CD8-positive, alpha-beta T cell (primary cell): ENCODE measurements at regions of chr6 and their contacts with region 1.

Region 1: DNA sequence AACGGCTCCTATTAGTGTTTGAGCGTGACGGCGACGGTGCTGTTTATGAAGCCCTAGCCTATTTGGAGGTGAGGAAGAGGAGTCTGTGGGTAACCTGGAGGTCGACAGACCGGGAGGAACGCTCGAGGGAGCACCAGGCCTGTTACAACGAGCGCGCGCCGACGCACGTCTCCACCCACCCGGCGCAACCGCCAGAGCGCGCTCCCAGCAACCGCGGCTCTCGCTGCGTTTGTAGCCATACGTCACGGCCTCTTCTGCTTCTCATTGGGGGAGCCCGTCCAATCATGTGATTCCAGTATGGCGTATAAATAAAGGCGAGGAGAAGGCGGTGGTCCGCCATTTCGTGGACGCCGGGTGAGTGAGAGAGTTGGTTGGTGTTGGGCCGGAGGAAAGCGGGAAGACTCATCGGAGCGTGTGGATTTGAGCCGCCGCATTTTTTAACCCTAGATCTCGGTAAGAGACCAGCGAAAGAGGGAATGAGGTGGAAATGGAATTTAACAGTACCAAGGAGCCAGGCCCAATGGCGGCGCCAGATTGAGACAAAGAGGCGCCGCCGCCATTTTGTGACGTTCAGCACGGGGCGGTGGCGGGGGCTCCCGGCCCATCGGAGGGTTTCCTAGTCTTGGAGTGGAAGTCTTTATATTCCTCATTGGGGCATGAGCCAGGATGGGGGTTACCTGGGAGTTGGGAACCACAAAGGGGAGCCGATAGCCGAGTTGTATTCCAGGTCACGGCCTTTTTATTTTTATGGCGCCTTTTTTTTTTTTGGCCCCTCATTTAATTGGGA is at the start of gene SRSF3:
- DNase-seq: peak; percentile 90 to 99 (median 94)
- ATAC-seq: peak; percentile 86
- H3K4me3 ChIP-seq: peak within 1 kb of the TSS; percentile 72 to 74
- H3K4me3 Mint-ChIP-seq: peak within 1 kb of the TSS; percentile 97
- H3K27ac ChIP-seq: peak within 1 kb of the TSS; percentile 93 to 95
- H3K27ac Mint-ChIP-seq: peak within 1 kb of the TSS; percentile 99
- H3K4me1 ChIP-seq: peaks cover 42% of the 10 kb centered on the region
- H3K4me1 Mint-ChIP-seq: peaks cover 45% of the 10 kb centered on the region
- H3K27me3 ChIP-seq: no peaks in the 10 kb centered on the region
- H3K27me3 Mint-ChIP-seq: no peaks in the 10 kb centered on the region
- CTCF ChIP-seq: no peak
- total RNA-seq, gene SRSF3: 620 to 627 TPM

Region 2: DNA sequence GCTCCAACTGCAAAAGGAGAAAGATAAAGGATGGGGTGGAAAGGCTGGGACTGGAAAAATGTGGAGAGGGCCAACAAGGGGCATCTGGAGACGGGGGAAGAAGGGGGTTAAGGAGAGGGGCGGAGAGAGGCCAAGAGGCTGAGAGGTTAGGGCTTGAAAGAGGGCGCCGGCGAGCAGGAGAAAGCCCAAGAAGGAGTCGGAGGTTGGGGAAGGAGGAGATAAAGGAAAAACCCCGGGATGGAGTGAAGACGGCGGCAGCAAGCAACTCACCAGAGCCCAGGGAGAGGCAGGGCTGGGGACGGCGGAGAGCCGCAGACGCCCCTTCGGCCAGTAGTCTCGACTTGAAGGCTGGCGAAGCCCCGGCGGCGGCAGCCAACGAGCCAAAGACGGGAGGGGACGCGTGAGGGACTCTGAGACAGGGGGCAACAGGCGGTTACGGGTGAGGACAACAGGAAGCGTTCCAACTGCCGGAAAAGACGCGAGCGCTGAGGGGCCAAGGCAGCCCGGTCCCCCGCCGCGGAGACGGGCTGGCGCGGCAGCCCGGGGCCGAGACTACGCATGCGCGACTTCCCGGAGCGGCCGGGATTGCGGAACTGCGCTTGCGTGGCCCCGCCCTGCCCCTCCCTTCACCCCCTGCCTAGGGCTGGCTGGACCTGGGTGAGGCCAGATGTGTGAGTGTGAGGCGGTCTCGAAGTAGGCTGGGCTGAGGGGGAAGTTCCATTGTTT is 47.1 kb before region 1 on chr6 and contains the start of gene STK38:
- CTCF ChIA-PET with region 1: interaction called, 7 read pairs
- POLR2A ChIA-PET with region 1: interaction called, 141 read pairs
- intact Hi-C with region 1: loop called (anchors 1 kb)
- DNase-seq: peak; percentile 85 to 98 (median 94)
- ATAC-seq: peak; percentile 72
- H3K4me3 ChIP-seq: peak within 1 kb of the TSS; percentile 82 to 85
- H3K4me3 Mint-ChIP-seq: peak within 1 kb of the TSS; percentile 99
- H3K27ac ChIP-seq: peak within 1 kb of the TSS; percentile 92 to 94
- H3K27ac Mint-ChIP-seq: peak within 1 kb of the TSS; percentile 99
- H3K4me1 ChIP-seq: peaks cover 32% of the 10 kb centered on the region
- H3K4me1 Mint-ChIP-seq: peaks cover 52% of the 10 kb centered on the region
- H3K27me3 ChIP-seq: no peaks in the 10 kb centered on the region
- H3K27me3 Mint-ChIP-seq: no peaks in the 10 kb centered on the region
- CTCF ChIP-seq: no peak
- total RNA-seq, gene STK38: 37.6 to 38.7 TPM

Region 3: DNA sequence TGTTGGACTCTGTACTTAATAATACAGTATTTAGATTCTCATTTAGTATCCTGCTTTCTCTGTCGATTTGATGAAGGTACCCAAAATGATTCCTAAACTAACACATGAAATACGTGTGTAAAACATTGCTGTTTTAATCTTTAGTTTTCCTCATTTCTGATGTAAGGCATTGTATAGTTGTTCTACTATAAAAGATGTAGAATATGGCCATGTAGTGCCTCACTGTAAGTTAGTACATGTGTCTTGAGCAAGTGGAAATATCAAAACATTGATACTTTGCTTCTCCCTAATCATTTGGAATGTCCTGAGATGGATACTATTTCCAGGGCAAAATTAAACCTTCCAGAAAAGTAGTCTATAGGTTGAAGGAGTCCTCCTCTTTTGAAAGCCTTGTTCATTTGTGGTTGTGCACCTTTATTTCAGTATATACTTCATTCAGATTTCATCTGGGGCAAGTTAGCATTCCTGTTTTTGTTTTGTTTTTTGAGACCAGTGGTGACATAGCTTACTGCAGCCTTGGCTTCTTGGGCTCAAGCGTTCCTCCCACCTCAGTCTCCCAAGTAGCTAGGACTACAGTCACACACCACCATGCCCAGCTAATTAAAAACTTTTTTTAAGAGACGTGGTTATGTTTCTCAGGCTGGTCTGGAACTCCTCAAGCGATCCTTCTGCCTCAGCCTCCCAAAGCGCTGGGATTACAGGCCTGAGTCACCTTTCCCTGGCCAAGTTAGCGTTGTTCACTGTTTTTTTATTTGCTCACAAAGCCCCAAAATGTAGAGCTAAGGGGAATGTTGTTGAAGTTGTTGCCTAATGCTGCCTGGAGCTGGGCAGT is 11.6 kb after region 1 on chr6:
- CTCF ChIA-PET with region 1: interaction called, 4 read pairs
- POLR2A ChIA-PET with region 1: interaction called, 51 read pairs
- intact Hi-C with region 1: no loop called
- DNase-seq: no peak
- ATAC-seq: peak; percentile 18
- H3K4me3 ChIP-seq: no peak overlapping the region
- H3K4me3 Mint-ChIP-seq: peak overlapping the region; percentile 42
- H3K27ac ChIP-seq: peak overlapping the region in 1 of 2 experiments; percentile 53
- H3K27ac Mint-ChIP-seq: peak overlapping the region; percentile 82
- H3K4me1 ChIP-seq: peaks cover 76% of the 10 kb centered on the region
- H3K4me1 Mint-ChIP-seq: peaks cover 86% of the 10 kb centered on the region
- H3K27me3 ChIP-seq: no peaks in the 10 kb centered on the region
- H3K27me3 Mint-ChIP-seq: no peaks in the 10 kb centered on the region
- CTCF ChIP-seq: no peak

Region 4: GRCh38 chr6:37092923-37093920 is 499.0 kb after region 1 on chr6:
- CTCF ChIA-PET with region 1: no interaction called
- POLR2A ChIA-PET with region 1: no interaction called
- intact Hi-C with region 1: no loop called
- DNase-seq: no peak
- ATAC-seq: no peak
- H3K4me3 ChIP-seq: no peak overlapping the region
- H3K4me3 Mint-ChIP-seq: no peak overlapping the region
- H3K27ac ChIP-seq: no peak overlapping the region
- H3K27ac Mint-ChIP-seq: no peak overlapping the region
- H3K4me1 ChIP-seq: no peaks in the 10 kb centered on the region
- H3K4me1 Mint-ChIP-seq: peaks cover 10% of the 10 kb centered on the region
- H3K27me3 ChIP-seq: no peaks in the 10 kb centered on the region
- H3K27me3 Mint-ChIP-seq: no peaks in the 10 kb centered on the region
- CTCF ChIP-seq: no peak